PC-9 (cell line): ENCODE measurements at regions of chr6 and their contacts with region 1.

Region 1: DNA sequence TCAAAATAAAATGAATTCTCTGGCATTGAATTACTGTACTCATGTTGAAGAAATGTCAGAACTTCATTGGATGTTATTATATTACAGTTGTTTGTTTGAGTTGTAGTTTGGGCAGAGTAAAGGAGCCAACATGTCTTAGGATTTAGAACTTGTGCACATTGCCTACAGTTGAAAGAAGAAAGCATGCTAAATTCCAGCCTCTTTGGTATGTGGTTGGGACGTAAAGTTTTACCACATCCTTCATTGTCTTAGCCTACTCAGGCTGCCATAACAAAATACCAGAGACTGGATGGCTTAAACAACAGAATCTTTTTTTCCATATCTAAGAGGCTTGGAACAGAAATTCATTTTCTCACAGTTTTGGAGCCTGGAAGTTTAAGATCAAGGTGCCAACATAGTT is 42.4 kb downstream of the HFE start:
- DNase-seq: no peak
- H3K4me3 ChIP-seq: no peak overlapping the region
- H3K27ac ChIP-seq: no peak overlapping the region
- H3K4me1 ChIP-seq: peaks cover 38% of the 10 kb centered on the region
- H3K27me3 ChIP-seq: no peaks in the 10 kb centered on the region
- CTCF ChIP-seq: no peak

Region 2: DNA sequence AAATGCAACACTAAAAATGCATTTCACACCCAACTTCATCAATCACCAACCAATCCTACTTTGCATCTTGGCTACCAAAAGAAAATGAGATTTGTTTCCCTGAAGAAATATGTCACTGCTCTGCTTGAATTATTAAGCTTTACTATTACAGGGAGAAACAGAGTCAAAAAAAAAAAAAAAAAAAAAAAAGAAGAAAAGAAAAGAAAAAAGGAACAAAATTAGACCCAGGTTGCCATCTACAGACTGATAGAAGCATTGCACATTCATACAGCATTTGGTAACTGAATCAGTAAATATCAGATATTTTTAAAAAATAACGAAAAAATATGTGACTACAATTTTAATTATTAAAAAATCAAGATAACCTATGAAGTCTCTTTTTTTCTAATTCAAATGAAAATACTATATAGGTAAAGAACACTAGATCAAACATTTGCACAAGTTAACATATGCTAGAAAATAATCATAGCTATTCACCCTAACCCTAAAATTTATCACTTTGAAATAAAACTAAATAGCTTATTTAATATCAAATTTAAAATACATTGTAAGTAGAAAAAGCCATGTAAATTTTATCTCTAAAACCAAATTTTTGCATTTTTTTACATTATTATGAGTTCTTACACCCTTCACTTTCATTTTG is 1855.1 kb before region 1 on chr6:
- CTCF ChIA-PET with region 1: no interaction called
- POLR2A ChIA-PET with region 1: no interaction called
- intact Hi-C with region 1: no loop called
- DNase-seq: no peak
- H3K4me3 ChIP-seq: no peak overlapping the region
- H3K27ac ChIP-seq: no peak overlapping the region
- H3K4me1 ChIP-seq: no peaks in the 10 kb centered on the region
- H3K27me3 ChIP-seq: no peaks in the 10 kb centered on the region
- CTCF ChIP-seq: peak; percentile 70

Region 3: GRCh38 chr6:25652007-25652515 is 477.6 kb before region 1 on chr6 and contains the start of gene SCGN:
- CTCF ChIA-PET with region 1: no interaction called
- POLR2A ChIA-PET with region 1: no interaction called
- intact Hi-C with region 1: no loop called
- DNase-seq: no peak
- H3K4me3 ChIP-seq: no peak within 1 kb of the TSS
- H3K27ac ChIP-seq: no peak within 1 kb of the TSS
- H3K4me1 ChIP-seq: peaks cover 3% of the 10 kb centered on the region; the same call in 1 of the 2 replicates
- H3K27me3 ChIP-seq: no peaks in the 10 kb centered on the region
- CTCF ChIP-seq: no peak
- total RNA-seq, gene SCGN: not detected in 2 replicates

Region 4: DNA sequence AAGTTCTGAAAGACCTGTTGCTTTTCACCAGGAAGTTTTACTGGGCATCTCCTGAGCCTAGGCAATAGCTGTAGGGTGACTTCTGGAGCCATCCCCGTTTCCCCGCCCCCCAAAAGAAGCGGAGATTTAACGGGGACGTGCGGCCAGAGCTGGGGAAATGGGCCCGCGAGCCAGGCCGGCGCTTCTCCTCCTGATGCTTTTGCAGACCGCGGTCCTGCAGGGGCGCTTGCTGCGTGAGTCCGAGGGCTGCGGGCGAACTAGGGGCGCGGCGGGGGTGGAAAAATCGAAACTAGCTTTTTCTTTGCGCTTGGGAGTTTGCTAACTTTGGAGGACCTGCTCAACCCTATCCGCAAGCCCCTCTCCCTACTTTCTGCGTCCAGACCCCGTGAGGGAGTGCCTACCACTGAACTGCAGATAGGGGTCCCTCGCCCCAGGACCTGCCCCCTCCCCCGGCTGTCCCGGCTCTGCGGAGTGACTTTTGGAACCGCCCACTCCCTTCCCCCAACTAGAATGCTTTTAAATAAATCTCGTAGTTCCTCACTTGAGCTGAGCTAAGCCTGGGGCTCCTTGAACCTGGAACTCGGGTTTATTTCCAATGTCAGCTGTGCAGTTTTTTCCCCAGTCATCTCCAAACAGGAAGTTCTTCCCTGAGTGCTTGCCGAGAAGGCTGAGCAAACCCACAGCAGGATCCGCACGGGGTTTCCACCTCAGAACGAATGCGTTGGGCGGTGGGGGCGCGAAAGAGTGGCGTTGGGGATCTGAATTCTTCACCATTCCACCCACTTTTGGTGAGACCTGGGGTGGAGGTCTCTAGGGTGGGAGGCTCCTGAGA is 42.2 kb before region 1 on chr6 and contains the start of gene HFE:
- CTCF ChIA-PET with region 1: no interaction called
- POLR2A ChIA-PET with region 1: interaction called, 13 read pairs
- intact Hi-C with region 1: no loop called
- DNase-seq: peak; percentile 56
- H3K4me3 ChIP-seq: peak within 1 kb of the TSS; percentile 78
- H3K27ac ChIP-seq: peak within 1 kb of the TSS; percentile 72
- H3K4me1 ChIP-seq: peaks cover 27% of the 10 kb centered on the region
- H3K27me3 ChIP-seq: no peaks in the 10 kb centered on the region
- CTCF ChIP-seq: no peak
- total RNA-seq, gene HFE: 33.3 and 46.0 TPM in 2 replicates